Activated CD8-positive, alpha-beta T cell treated with anti-CD3 and anti-CD28 coated beads for 36 hours (primary cell): ENCODE measurements at regions of chr1 and their contacts with region 1.

Region 1: DNA sequence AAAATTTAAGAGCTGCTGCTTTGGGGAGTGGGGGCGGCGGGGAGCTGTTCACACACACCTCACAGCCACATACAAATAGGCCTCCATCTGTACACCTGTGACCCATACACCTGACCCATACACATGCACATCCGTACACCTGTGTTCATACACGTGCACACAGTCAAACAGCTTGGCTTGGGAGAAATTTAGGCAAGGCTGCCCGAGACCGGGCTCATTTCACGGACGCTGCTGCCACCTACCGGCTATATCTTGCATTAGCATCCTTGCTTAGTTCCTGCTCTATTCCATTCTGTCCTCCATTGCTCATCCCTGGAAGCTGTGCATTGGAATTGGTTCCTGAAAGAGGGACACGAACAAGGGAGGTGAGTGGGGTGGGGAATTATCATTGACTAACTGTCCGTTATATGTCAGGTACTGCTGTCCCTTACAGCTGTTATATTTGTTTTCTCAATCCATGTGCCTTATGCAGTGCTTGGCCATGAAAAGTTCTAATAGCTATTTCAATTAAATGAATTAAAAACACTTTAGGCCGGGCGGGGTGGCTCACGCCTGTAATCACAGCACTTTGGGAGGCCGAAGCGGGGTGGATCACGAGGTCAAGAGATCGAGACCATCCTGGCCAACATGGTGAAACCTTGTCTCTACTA is 37.1 kb upstream of the EPB41 start:
- DNase-seq: peak; percentile 84
- ATAC-seq: peak; percentile 77
- H3K4me3 Mint-ChIP-seq: no peak overlapping the region
- H3K27ac Mint-ChIP-seq: no peak overlapping the region
- H3K4me1 Mint-ChIP-seq: peaks cover 6% of the 10 kb centered on the region
- H3K27me3 Mint-ChIP-seq: peaks cover 2% of the 10 kb centered on the region
- CTCF ChIP-seq: peak; percentile 98

Region 2: DNA sequence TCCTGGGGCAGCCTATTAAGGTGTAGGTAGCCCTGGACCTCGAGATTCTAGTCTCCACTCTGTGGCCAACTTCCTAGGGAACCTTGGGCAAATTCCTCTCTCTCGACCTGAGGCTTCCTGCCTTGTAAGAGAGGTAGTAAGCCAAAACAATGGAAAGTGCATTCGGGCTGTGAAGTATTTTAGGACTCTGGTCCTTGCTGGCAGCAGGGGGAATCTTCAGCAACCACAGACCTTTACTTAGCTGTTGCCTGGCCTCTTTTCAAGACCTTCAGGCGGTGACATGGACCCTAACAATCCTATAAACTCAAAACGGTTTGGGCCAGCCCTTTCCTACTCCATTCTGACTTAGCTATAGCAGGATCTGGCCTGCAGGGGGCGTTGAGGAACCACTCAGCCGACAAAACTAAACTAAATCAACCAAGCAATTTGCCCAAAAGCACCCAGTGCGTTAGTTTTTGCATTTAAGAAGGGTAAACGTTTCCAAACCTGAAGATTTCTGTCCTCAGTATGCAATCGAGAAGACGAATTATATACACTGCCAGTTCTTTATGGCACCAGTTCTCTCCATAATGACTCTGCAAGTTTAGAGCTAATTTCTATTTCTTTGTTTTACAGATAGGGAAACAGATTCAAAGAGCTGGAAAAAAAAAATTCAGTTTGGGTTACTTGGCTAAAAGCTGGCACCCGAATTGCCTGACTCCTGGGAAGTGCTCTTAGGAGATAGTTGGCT is 628.8 kb before region 1 on chr1:
- CTCF ChIA-PET with region 1: interaction called, 11 read pairs
- POLR2A ChIA-PET with region 1: no interaction called
- intact Hi-C with region 1: no loop called
- DNase-seq: peak; percentile 95
- ATAC-seq: peak; percentile 31
- H3K4me3 Mint-ChIP-seq: peak overlapping the region; percentile 84
- H3K27ac Mint-ChIP-seq: peak overlapping the region; percentile 96
- H3K4me1 Mint-ChIP-seq: peaks cover 51% of the 10 kb centered on the region
- H3K27me3 Mint-ChIP-seq: no peaks in the 10 kb centered on the region
- CTCF ChIP-seq: peak; percentile 93

Region 3: GRCh38 chr1:28642847-28643635 is 234.2 kb before region 1 on chr1 and contains the start of gene TAF12:
- CTCF ChIA-PET with region 1: interaction called, 12 read pairs
- POLR2A ChIA-PET with region 1: no interaction called
- intact Hi-C with region 1: loop called (anchors 5 kb)
- DNase-seq: peak; percentile 91
- ATAC-seq: peak; percentile 84
- H3K4me3 Mint-ChIP-seq: peak within 1 kb of the TSS; percentile 98
- H3K27ac Mint-ChIP-seq: peak within 1 kb of the TSS; percentile 97
- H3K4me1 Mint-ChIP-seq: peaks cover 44% of the 10 kb centered on the region
- H3K27me3 Mint-ChIP-seq: no peaks in the 10 kb centered on the region
- CTCF ChIP-seq: peak; percentile 42
- total RNA-seq, gene TAF12: 21.3 to 23.0 TPM

Region 4: GRCh38 chr1:28782011-28782410 is 95.2 kb before region 1 on chr1:
- CTCF ChIA-PET with region 1: interaction called, 129 read pairs
- POLR2A ChIA-PET with region 1: interaction called, 10 read pairs
- intact Hi-C with region 1: loop called (anchors 1 kb)
- DNase-seq: no peak
- ATAC-seq: no peak
- H3K4me3 Mint-ChIP-seq: no peak overlapping the region
- H3K27ac Mint-ChIP-seq: no peak overlapping the region
- H3K4me1 Mint-ChIP-seq: peaks cover 4% of the 10 kb centered on the region
- H3K27me3 Mint-ChIP-seq: peaks cover 1% of the 10 kb centered on the region
- CTCF ChIP-seq: no peak

Region 5: DNA sequence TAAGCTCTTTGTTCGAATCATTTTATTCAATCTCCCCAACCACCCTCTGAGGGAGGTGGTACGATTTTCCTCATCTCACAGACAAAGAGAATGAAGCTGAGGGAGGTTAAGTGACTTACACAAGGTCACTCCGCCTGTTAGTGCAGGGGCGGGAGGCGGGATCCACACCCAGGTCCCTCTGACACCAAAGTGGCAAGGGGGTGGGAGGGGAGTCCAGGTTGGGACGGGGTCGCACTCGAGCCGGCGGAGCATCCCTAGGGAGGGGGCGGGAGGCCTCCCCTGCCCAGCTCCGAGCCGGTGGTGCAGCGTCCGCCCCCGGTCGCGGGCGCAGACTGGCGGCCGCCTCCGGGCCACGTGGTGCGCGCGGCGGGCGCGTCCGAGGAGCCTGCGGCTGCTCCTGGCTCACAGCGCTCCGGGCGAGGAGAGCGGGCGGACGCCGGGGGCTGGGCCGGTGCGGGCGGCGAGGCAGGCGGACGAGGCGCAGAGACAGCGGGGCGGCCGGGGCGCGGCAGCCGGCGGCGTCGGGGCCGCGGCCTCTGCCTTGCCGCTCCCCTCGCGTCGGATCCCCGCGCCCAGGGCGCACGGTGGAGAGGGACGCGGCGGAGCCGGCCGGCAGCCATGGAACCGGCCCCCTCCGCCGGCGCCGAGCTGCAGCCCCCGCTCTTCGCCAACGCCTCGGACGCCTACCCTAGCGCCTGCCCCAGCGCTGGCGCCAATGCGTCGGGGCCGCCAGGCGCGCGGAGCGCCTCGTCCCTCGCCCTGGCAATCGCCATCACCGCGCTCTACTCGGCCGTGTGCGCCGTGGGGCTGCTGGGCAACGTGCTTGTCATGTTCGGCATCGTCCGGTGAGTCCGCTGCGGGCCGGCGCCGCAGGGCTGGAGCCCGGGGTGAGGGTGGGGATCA is 65.2 kb before region 1 on chr1 and contains the start of gene OPRD1:
- CTCF ChIA-PET with region 1: interaction called, 11 read pairs
- POLR2A ChIA-PET with region 1: no interaction called
- intact Hi-C with region 1: no loop called
- DNase-seq: no peak
- ATAC-seq: no peak
- H3K4me3 Mint-ChIP-seq: no peak within 1 kb of the TSS
- H3K27ac Mint-ChIP-seq: no peak within 1 kb of the TSS
- H3K4me1 Mint-ChIP-seq: peaks cover 2% of the 10 kb centered on the region
- H3K27me3 Mint-ChIP-seq: peaks cover 50% of the 10 kb centered on the region
- CTCF ChIP-seq: no peak
- total RNA-seq, gene OPRD1: 0.02 TPM in 1 of 2 experiments, not detected in the other

Region 6: DNA sequence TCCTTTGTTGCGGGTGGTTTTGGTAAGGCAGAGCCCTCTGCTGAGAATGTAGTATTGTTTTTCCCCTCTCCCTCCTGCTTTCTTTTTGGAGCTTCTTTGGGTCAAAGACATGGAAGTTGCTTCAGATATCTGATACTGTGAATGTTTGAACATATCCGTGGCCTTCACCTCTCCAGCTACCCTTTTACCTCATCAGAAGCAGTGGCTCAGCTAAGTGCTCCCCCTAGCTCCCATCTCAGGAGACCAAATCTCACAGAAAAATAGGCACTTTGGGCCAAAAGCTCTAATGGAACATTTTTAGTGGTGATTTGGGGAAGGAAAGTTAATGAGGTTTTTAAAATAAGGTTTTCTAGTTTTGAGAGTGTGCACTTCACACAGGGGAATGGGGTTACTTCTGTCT is 240.1 kb after region 1 on chr1:
- CTCF ChIA-PET with region 1: interaction called, 14 read pairs
- POLR2A ChIA-PET with region 1: no interaction called
- intact Hi-C with region 1: loop called (anchors 5 kb)
- DNase-seq: no peak
- ATAC-seq: no peak
- H3K4me3 Mint-ChIP-seq: no peak overlapping the region
- H3K27ac Mint-ChIP-seq: peak overlapping the region; percentile 29
- H3K4me1 Mint-ChIP-seq: peaks cover 10% of the 10 kb centered on the region
- H3K27me3 Mint-ChIP-seq: peaks cover 2% of the 10 kb centered on the region
- CTCF ChIP-seq: no peak